Activated T-helper 1 cell treated with anti-CD3 and anti-CD28 coated beads, Interleukin-12 subunit alpha, Interleukin-12 subunit beta, Interleukin-2, Interleukin-4 antibody, amounts not matched to agents 30 ng/mL and 10 ng/mL and 1 ng/mL, durations not matched to agents 14 hours and 24 hours and 36 hours (primary cell): ENCODE measurements at regions of chr11 and their contacts with region 1.

Region 1: GRCh38 chr11:85752890-85753581 is 57.9 kb downstream of the SYTL2 start:
- DNase-seq: peak; percentile 89
- H3K4me3 Mint-ChIP-seq: peak overlapping the region; percentile 73
- H3K27ac Mint-ChIP-seq: peak overlapping the region; percentile 98
- H3K4me1 Mint-ChIP-seq: peaks cover 99% of the 10 kb centered on the region
- H3K27me3 Mint-ChIP-seq: peaks cover 4% of the 10 kb centered on the region

Region 2: DNA sequence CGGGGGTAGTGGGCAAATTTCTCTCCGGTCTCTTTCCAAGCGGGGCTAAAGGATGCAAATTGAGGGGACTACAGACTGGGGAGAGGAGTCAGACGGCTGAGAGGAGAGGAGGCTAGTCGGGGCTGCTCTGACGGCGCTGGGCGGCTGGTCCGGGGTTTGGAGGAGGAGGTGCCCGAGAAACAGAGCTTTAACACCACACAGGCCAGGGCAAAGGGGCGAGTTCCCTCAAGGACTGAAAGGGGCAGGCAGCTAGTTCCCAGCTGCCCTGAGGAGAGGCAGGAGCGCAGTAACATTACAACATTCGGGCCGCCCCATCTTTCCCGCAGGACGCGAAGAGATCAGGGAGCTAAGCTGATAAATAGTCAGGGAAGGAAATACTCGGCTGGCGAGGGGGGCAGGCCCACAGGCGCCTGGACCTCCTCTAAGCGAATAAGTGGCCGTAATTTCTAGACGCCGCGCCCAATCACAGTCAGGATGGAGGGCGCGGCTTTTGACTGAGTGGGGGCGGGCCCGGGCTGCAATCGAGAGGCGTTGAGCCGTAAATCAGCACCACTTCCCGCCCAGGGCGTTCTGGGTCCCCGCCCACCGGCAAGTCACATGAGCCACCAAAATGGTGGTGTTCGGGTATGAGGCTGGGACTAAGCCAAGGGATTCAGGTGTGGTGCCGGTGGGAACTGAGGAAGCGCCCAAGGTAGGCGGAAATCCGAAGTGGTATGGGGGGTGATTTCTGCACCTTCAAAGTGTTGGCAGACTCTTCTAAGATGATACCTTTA is 124.9 kb before region 1 on chr11 and contains the start of gene TMEM126B:
- intact Hi-C with region 1: loop called (anchors 1 kb)
- DNase-seq: peak; percentile 96
- H3K4me3 Mint-ChIP-seq: peak within 1 kb of the TSS; percentile 97
- H3K27ac Mint-ChIP-seq: peak within 1 kb of the TSS; percentile 94
- H3K4me1 Mint-ChIP-seq: peaks cover 52% of the 10 kb centered on the region
- H3K27me3 Mint-ChIP-seq: peaks cover 6% of the 10 kb centered on the region
- total RNA-seq, gene TMEM126B: 52.5 and 57.2 TPM in 2 replicates

Region 3: GRCh38 chr11:85694386-85694980 is 58.6 kb before region 1 on chr11:
- intact Hi-C with region 1: loop called (anchors 1 kb)
- DNase-seq: no peak
- H3K4me3 Mint-ChIP-seq: no peak overlapping the region
- H3K27ac Mint-ChIP-seq: no peak overlapping the region
- H3K4me1 Mint-ChIP-seq: peaks cover 51% of the 10 kb centered on the region
- H3K27me3 Mint-ChIP-seq: peaks cover 4% of the 10 kb centered on the region

Region 4: DNA sequence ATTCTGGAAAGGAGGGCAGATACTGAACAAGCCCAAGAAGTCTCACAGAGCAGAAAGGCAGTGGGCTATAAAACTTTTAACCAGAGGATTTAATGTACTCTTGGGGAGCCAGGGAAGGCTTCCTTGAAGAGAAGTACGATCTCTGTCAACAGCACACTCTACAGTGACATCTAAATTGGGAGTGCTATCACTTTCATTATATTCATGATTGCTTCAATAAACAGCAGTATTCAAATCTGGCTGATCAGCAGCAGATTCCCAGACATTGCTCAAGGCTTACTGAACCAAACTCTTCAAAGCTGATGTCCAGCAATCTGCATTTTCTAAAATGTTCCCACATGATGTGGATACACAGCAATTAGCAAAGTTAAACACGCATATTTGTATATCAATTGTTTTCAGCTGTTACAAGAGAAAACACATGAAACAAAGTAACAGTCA is 13.7 kb after region 1 on chr11:
- intact Hi-C with region 1: loop called (anchors 1 kb)
- DNase-seq: no peak
- H3K4me3 Mint-ChIP-seq: no peak overlapping the region
- H3K27ac Mint-ChIP-seq: no peak overlapping the region
- H3K4me1 Mint-ChIP-seq: peaks cover 84% of the 10 kb centered on the region
- H3K27me3 Mint-ChIP-seq: no peaks in the 10 kb centered on the region

Region 5: DNA sequence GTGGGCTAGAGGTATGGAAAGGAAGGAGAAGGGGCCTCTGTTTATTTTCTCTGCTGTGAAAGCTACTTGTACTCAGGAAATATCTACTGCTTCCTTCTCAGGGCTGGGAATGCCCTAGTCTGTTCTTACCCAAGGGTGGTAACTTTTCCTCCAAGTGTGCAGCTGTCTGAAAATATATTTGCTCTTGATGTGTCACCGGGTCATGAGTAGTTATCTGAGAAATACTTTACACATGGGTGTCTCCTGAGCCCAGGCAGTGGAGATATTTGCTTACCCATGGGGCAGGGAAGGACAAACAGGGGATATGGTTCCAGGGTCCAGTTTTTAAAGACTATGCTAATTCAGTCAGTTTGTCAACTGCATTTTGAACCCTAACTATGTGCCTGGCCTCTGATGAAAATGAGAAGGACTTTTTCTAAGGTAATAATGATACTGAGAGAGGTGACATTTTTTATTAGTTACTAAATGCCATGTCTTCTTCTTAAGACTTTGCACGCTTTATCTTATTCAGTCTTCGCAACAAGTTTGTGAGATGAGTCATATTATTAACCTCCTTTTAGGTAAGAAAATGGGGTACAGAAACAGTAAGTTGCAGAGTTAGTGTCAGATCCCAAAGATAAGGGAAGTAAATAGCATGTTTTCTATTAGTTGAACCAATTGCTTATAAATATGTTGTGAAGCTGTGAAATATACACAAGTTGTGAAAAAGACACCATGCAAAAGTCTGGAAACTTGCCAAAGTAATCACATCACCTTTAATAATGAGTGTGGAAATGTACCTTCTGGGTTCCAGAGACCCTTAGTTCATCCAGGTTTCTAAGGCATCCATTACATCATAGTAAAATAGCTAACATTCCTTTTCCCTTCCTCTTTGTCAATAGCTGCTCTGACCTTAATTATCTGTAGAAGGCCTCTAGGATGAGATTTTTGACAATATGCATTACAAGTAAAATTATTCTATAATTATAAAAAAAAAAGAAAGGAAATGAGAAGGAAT is 35.1 kb after region 1 on chr11:
- intact Hi-C with region 1: loop called (anchors 2 kb)
- DNase-seq: no peak
- H3K4me3 Mint-ChIP-seq: peak overlapping the region; percentile 20
- H3K27ac Mint-ChIP-seq: peak overlapping the region; percentile 48
- H3K4me1 Mint-ChIP-seq: peaks cover 67% of the 10 kb centered on the region
- H3K27me3 Mint-ChIP-seq: no peaks in the 10 kb centered on the region

Region 6: GRCh38 chr11:85826116-85826855 is 73.2 kb after region 1 on chr11:
- intact Hi-C with region 1: loop called (anchors 1 kb)
- DNase-seq: no peak
- H3K4me3 Mint-ChIP-seq: peak overlapping the region; percentile 1
- H3K27ac Mint-ChIP-seq: peak overlapping the region; percentile 87
- H3K4me1 Mint-ChIP-seq: peaks cover 74% of the 10 kb centered on the region
- H3K27me3 Mint-ChIP-seq: no peaks in the 10 kb centered on the region

Region 7: GRCh38 chr11:86499721-86500141 is 746.7 kb after region 1 on chr11:
- intact Hi-C with region 1: loop called (anchors 5 kb)
- DNase-seq: no peak
- H3K4me3 Mint-ChIP-seq: no peak overlapping the region
- H3K27ac Mint-ChIP-seq: no peak overlapping the region
- H3K4me1 Mint-ChIP-seq: no peaks in the 10 kb centered on the region
- H3K27me3 Mint-ChIP-seq: peaks cover 11% of the 10 kb centered on the region